H1 (cell line): ENCODE measurements at regions of chr11 and their contacts with region 1.

Region 1: GRCh38 chr11:118791111-118791965 is at the start of gene DDX6:
- DNase-seq: peak; percentile 25 to 90
- H3K4me3 ChIP-seq: peak within 1 kb of the TSS; percentile 88 to 100 (median 93)
- H3K27ac ChIP-seq: peak within 1 kb of the TSS; percentile 99
- H3K4me1 ChIP-seq: peaks cover 0 to 3% (median 2%) of the 10 kb centered on the region in 4 experiments; a peak in 3 of 7 replicates
- H3K27me3 ChIP-seq: no peaks in the 10 kb centered on the region
- CTCF ChIP-seq: peak; percentile 28 to 48 (median 40)
- EP300 ChIP-seq: no peak
- POLR2A ChIP-seq: peak; percentile 71 to 94; a peak in 2 of 3 replicates
- RAD21 ChIP-seq: peak; percentile 8 to 28; a peak in 2 of 4 replicates
- total RNA-seq, gene DDX6: 174 and 181 TPM in 2 replicates

Region 2: GRCh38 chr11:118547132-118547531 is 244.2 kb before region 1 on chr11:
- CTCF ChIA-PET with region 1: no interaction called
- POLR2A ChIA-PET with region 1: no interaction called
- DNase-seq: no peak
- H3K4me3 ChIP-seq: no peak overlapping the region
- H3K27ac ChIP-seq: no peak overlapping the region
- H3K4me1 ChIP-seq: no peaks in the 10 kb centered on the region
- H3K27me3 ChIP-seq: no peaks in the 10 kb centered on the region
- CTCF ChIP-seq: no peak
- EP300 ChIP-seq: no peak
- POLR2A ChIP-seq: no peak
- RAD21 ChIP-seq: no peak

Region 3: DNA sequence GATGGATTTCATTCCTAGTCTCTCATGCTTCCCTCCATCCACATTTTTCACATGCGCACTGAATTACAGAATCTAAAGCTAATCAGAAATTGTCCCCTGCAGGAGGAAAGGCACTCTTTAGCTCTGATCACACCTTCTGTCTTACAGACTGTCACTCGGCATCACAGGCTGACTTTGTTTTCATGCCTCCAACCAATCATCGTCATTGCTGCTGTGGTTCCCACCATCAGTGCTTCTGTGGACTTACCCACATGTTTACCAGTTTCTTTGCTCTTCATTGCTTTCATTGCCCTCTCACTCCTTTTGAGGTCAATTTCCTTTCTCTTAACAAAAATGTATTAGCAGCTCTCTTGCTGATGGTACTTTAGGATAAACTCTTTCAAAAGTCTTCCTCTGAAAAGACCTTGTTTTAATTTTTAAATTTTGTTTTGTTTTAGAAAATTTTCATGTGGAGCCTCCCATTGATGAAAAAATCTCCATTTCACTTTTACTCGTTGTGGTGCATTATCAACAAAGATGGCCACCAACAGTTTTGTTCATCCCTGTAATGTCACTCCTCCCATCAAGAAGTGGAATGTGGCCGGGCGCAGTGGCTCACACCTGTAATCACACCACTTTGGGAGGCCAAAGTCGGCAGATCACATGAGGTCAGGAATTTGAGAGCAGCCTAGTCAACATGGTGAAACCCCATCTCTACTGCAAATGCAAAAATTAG is 91.7 kb before region 1 on chr11:
- CTCF ChIA-PET with region 1: interaction called, 9 read pairs
- POLR2A ChIA-PET with region 1: interaction called, 14 read pairs
- DNase-seq: no peak
- H3K4me3 ChIP-seq: no peak overlapping the region
- H3K27ac ChIP-seq: no peak overlapping the region
- H3K4me1 ChIP-seq: peaks cover 0 to 11% (median 6%) of the 10 kb centered on the region in 4 experiments; a peak in 5 of 7 replicates
- H3K27me3 ChIP-seq: no peaks in the 10 kb centered on the region
- CTCF ChIP-seq: no peak
- EP300 ChIP-seq: no peak
- POLR2A ChIP-seq: no peak
- RAD21 ChIP-seq: no peak

Region 4: GRCh38 chr11:118771547-118772288 is 19.6 kb before region 1 on chr11:
- CTCF ChIA-PET with region 1: interaction called, 10 read pairs
- POLR2A ChIA-PET with region 1: interaction called, 17 read pairs
- DNase-seq: no peak
- H3K4me3 ChIP-seq: no peak overlapping the region
- H3K27ac ChIP-seq: no peak overlapping the region
- H3K4me1 ChIP-seq: no peaks in the 10 kb centered on the region
- H3K27me3 ChIP-seq: no peaks in the 10 kb centered on the region
- CTCF ChIP-seq: no peak
- EP300 ChIP-seq: no peak
- POLR2A ChIP-seq: no peak
- RAD21 ChIP-seq: no peak

Region 5: DNA sequence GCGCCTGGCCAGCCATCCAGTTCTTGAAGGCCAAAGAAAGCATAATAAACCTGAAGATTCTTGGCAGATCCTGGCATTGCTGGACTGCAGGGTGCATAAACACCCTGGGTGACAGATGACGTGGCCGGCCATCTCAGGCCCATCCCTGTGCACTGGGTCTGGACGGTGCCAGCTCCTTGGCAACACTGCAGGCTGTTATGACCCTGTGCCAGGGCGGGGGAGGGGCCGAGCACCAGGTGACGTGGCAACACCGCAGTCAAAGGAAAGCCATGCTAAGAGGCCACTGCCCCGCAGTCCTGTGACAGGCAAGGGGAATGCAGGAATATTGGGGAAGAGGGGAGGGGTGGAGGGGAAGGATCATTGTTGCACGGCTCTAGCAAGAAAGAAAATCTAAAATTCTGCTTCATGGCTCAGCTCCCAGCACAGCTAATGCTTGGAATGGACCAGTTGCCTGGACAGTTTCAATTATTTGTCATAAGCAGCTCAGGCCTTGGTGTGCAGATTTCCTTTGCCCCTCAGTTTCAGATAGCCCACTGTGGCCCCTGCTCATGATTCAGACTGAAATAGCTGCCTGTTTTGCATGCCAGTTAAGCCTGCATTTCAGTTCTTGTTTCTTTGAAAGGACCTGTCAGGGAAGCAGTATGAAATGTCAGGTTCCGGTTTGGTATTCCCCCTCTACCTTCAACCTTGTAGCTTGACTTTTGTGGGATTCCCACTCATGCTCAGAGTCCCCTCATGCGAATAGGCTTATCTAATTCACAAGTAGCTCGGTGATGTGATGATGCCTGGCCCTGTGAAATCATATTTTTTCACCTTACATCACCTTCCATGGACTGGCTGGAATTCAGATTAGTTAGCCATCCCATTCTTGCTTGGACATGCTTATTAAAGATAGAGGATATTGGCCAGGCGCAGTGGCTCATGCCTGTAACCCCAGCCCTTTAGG is 29.3 kb after region 1 on chr11:
- CTCF ChIA-PET with region 1: interaction called, 5 read pairs
- POLR2A ChIA-PET with region 1: interaction called, 10 read pairs
- DNase-seq: peak in 1 of 2 experiments; percentile 52
- H3K4me3 ChIP-seq: no peak overlapping the region
- H3K27ac ChIP-seq: no peak overlapping the region
- H3K4me1 ChIP-seq: peaks cover 0 to 7% (median 0%) of the 10 kb centered on the region in 4 experiments; a peak in 4 of 7 replicates
- H3K27me3 ChIP-seq: no peaks in the 10 kb centered on the region
- CTCF ChIP-seq: no peak
- EP300 ChIP-seq: no peak
- POLR2A ChIP-seq: no peak
- RAD21 ChIP-seq: no peak

Region 6: GRCh38 chr11:118883368-118884071 is 92.2 kb after region 1 on chr11 and contains the start of gene CXCR5:
- CTCF ChIA-PET with region 1: interaction called, 16 read pairs
- POLR2A ChIA-PET with region 1: interaction called, 4 read pairs
- DNase-seq: no peak
- H3K4me3 ChIP-seq: no peak within 1 kb of the TSS
- H3K27ac ChIP-seq: no peak within 1 kb of the TSS
- H3K4me1 ChIP-seq: peaks cover 0 to 14% (median 9%) of the 10 kb centered on the region in 4 experiments; a peak in 6 of 7 replicates
- H3K27me3 ChIP-seq: no peaks in the 10 kb centered on the region; a peak in 1 of 7 replicates
- CTCF ChIP-seq: peak in 1 of 3 experiments; percentile 10; a peak in 1 of 4 replicates
- EP300 ChIP-seq: no peak
- POLR2A ChIP-seq: no peak
- RAD21 ChIP-seq: 0 out of 4 replicates have a peak, but pooled peaks of 1 of the 2 experiments have one; percentile 9
- total RNA-seq, gene CXCR5: not detected in 2 replicates

Region 7: DNA sequence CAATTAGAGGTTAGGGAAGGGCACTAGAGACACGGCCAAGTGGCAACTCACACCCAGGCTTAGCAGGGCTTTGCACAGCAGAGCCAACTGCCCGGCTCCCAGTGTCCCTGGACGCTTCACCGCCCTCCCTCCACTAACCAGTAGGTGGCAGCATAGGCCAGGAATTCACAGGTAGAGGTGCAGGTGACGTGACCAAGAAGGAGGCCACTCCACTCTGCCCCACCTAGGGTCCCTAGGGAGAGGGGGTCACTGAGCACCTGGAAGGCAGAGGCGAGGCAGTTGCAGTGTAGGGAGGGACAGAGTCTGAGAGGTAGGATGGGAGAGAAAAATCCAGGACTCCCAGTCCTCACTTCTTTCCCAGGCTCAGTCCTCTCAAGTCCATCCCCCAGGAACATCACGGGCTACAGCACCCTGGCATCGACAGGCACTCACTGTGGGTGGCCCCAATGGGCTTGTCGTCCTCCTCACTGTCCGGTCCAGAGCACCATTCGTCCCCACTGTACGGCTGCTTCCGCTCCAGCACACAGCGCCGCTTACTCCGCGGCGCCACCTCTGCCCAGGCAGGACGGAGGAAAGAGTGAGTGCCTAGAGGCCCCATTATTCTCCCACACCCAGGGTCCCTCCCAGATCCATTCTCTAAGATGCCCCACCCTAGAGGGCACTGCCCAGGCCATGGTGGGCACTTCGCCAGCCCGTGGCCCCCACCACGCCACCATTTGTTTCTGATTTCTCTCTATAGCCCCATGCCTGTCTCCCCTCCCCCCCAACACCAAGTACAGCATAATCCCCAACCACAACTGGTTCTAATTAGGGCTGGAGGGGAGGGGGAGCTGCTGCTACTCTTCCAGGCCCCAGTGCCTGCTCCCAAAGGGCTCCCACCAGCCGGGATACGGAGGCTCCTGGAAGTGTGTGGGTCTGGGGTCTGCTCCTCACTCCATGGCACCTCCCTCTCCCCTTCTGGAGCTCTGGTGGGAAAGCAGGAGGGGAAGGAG is 116.0 kb after region 1 on chr11:
- CTCF ChIA-PET with region 1: interaction called, 15 read pairs
- POLR2A ChIA-PET with region 1: interaction called, 101 read pairs
- DNase-seq: peak in 1 of 2 experiments; percentile 97
- H3K4me3 ChIP-seq: peak overlapping the region in 3 of 4 experiments; percentile 12 to 38 (median 15); a peak in 4 of 8 replicates
- H3K27ac ChIP-seq: peak overlapping the region; percentile 46; the same call in 1 of the 2 replicates
- H3K4me1 ChIP-seq: peaks cover 4 to 39% (median 31%) of the 10 kb centered on the region in 4 experiments
- H3K27me3 ChIP-seq: no peaks in the 10 kb centered on the region
- CTCF ChIP-seq: peak in 2 of 3 experiments; percentile 95 to 97; a peak in 3 of 4 replicates
- EP300 ChIP-seq: no peak
- POLR2A ChIP-seq: no peak; a peak in 1 of 3 replicates
- RAD21 ChIP-seq: peak; percentile 98 to 100